ENCODE measurements at regions of chr15 and their contacts with region 1.

Region 1: DNA sequence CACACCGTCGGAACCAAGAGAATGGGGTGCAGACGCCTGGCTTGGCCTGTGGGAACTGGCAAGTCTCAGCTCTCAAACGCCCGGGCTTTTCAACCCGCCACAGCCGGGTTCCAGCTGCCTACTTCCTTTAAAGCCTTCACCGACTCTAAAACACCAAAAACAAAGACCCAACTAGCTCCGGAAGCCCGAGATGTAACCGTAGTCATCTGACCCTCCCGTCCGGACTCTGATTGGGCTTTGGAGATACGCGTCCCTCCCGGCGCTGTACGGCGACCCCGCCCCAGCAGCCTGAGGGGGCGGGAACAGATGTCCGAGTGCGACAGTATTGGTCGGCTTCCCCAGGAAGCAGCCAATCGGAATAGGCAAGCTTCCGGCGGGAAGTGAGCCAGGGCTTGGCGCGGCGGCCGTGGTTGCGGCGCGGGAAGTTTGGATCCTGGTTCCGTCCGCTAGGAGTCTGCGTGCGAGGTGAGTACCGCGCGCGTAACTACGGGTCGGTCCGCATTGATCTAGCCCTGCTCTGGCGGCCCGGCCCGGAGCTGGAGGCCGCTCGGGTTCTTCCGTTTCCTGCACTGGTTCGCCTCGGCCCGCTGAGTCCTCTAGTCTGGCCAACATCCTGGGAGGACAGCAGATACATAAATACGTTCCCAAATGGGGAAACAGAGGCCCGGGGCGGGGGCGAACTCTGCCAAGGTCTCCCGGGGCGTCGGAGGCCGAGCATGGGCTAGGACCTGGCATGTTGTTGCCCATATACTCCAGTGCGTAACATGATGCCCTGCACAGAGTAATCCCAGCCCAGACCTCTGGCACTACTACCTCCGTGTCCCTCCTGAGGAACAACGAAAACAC is at the start of gene BLM:
- DNase-seq: peak; percentile 87 to 97 (median 94)
- ATAC-seq: peak; percentile 99
- H3K4me3 Mint-ChIP-seq: peak within 1 kb of the TSS; percentile 95 to 98 (median 96)
- H3K27ac Mint-ChIP-seq: peak within 1 kb of the TSS; percentile 91 to 98 (median 94)
- H3K4me1 Mint-ChIP-seq: peaks cover 14 to 30% (median 28%) of the 10 kb centered on the region in 4 donors
- H3K27me3 Mint-ChIP-seq: no peaks in the 10 kb centered on the region
- polyA plus RNA-seq, gene BLM: 2.6 to 4.1 (median 4.1) TPM

Region 2: DNA sequence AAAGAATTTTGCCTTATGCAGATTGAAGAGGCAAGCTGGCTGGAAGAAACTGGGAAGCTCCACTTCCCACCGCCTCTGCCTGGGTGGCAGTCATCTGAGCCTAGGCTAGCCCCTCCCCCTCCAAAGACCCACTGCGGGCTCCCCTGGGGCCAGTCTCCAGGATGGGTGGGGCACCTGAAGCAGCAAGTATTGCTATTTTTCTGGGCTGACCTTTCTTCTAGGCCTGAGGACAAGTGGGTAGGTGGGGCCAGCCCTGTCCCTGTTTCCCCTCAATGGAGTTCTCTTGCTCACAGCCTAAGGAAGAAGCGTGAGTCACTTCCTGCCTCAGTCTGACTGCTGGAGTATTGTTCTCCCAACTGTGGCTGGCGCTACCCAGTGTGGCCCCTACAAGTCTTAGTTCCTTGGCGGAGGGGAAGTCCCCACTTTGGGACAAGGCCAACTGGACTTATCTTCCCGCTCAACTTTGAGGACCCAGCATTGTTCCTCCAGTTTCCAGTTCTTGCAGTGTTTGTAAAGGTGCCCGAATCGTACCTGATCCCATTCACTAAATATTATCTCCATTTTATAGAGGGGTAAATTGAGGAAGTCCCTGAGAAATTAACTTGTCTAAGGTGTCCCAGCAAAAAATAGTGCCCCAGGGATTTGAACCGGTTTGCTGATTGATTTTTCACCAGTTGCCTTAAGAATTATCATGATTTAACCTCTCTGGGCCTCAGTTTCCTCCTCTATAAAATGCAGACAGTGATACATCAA is 152.6 kb after region 1 on chr15:
- POLR2A ChIA-PET with region 1: interaction called, 11 read pairs
- DNase-seq: peak in 3 of 10 donors; percentile 23 to 57 (median 28)
- ATAC-seq: peak; percentile 15 to 24
- H3K4me3 Mint-ChIP-seq: peak overlapping the region; percentile 78 to 95 (median 88)
- H3K27ac Mint-ChIP-seq: peak overlapping the region; percentile 83 to 97 (median 92)
- H3K4me1 Mint-ChIP-seq: peaks cover 18 to 52% (median 40%) of the 10 kb centered on the region in 4 donors
- H3K27me3 Mint-ChIP-seq: no peaks in the 10 kb centered on the region

Measured in naive thymus-derived CD8-positive, alpha-beta T cell (primary cell).